G401 (cell line): ENCODE measurements at regions of chr11 and their contacts with region 1.

Region 1: GRCh38 chr11:128290106-128290840 is 297.1 kb downstream of the ETS1 start:
- DNase-seq: peak; percentile 67

Region 2: DNA sequence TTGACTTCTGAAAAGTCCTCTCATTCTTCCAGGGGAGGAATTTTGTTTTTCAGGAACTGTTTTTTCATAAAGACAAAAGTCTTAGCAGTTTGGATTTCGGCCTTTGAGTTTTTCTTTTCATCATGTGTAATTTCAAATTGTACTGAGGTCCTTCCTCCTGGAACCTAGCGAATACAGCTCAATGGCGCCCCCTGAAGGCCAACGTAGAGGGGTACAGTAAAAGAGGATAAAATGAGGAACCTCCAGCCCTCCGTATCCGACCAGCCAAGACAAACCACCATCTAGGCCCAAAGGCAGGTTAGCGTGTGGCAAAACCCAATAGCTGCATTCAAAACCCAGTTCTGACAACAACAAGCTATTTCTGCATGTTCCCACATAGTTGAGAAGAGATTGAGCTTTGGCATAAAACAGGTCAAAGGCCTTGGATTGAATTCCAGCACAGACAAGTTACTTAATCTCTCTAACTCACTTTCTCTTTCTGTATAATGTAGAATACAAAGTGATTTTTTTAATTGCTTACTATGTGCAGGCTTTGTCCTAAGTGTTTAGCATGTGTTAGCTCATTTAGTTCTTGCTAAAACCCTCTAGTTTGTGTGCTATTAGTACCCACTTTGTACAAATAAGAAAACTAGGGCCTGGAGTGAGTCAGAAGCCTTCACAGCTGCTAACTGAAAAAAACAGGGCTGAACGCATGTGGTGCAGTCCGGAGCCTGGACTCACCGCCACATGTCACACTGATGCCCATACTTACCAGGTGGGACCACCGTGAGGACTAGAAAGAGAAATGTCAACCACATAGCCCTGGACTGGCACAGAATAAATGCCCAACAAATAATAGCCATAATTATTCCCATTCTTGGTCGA is 340.3 kb after region 1 on chr11:
- in situ Hi-C with region 1: loop called (anchors 25 kb)
- DNase-seq: peak; percentile 47